K562 (cell line): ENCODE measurements at regions of chr1 and their contacts with region 1.

Region 1: GRCh38 chr1:45583264-45583665 is 576 bp upstream of the NASP start:
- DNase-seq: peak; percentile 98 to 100 (median 98)
- ATAC-seq: peak; percentile 91
- H3K4me3 ChIP-seq: peak overlapping the region; percentile 88
- H3K27ac ChIP-seq: peak overlapping the region; percentile 97
- H3K4me1 ChIP-seq: peaks cover 6 to 21% of the 10 kb centered on the region in 2 experiments; a peak in 4 of 5 replicates
- H3K27me3 ChIP-seq: no peaks in the 10 kb centered on the region
- CTCF ChIP-seq: no peak
- EP300 ChIP-seq: no peak
- POLR2A ChIP-seq: no peak
- RAD21 ChIP-seq: no peak

Region 2: DNA sequence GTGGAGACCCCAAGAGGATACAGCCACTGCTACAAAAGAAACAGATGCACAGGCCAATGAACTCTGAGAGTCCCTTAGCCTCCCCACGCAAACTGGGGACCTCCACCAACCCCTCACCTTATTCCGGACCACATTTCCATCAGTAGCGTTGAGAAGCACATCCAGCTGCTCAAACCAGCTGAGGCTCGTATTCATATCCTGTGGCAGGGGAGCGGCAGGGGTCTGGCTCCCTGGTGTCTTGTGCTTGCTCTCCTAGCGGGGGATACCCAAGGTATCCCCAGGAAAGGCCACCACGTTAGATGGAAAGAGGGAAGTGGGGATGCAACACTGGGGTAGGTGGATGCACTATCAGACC is 83.9 kb before region 1 on chr1:
- CTCF ChIA-PET with region 1: no interaction called
- POLR2A ChIA-PET with region 1: interaction called, 11 read pairs
- in situ Hi-C with region 1: no loop called
- intact Hi-C with region 1: no loop called
- DNase-seq: peak in 1 of 4 experiments; percentile 55
- ATAC-seq: peak; percentile 3
- H3K4me3 ChIP-seq: peak overlapping the region; percentile 44
- H3K27ac ChIP-seq: peak overlapping the region; percentile 56; the same call in 2 of the 3 replicates
- H3K4me1 ChIP-seq: peaks cover 18 to 19% of the 10 kb centered on the region in 2 experiments; a peak in 4 of 5 replicates
- H3K27me3 ChIP-seq: no peaks in the 10 kb centered on the region
- CTCF ChIP-seq: 0 out of 6 replicates have a peak, but pooled peaks of 1 of the 3 experiments have one; percentile 7
- EP300 ChIP-seq: no peak
- POLR2A ChIP-seq: no peak
- RAD21 ChIP-seq: no peak

Region 3: DNA sequence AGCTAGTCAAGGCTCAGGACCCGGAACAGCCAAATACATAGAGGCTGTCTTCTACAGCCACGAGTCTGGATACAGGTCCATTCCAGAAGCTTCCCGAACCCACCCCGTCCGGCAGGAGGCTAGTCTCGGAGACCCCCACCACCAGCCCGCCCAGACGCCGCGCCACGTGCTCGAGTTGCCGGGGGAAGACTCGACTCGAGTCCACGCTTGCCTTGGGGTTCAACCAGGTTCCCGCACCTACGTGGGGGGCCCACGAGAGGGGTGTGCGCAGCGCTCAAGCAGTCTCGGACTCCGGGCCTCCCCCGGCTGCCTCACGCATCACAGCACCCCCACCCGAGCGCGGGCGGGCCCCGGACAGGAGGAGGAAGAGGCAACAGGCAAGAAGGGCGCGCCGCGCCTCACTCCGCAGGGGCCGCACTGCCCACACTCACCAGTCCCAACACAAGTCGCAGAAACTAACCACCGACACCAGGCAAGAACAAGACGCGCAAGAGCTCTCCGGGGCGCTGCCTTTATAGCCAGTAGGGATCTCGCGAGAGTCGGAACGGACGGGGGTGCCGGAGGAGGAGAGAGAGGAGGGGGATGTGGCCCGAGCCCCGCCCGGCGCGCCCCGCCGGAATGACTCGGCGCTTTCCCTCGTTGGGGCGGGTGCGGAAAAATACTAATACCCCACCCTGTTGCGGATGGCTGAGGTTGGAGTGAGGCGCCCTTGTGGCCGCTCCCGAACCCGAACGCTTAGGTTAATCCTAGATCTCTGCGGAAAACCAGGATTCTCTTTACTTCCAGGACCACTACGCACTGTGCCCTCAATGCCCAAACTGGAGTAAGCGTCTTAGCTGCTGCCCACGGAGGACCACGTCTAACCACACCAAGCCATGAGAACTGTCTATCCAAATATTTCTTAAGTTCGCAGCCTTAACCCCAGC is 61.6 kb before region 1 on chr1 and contains the start of gene PRDX1:
- CTCF ChIA-PET with region 1: no interaction called
- POLR2A ChIA-PET with region 1: interaction called, 142 read pairs
- in situ Hi-C with region 1: no loop called
- intact Hi-C with region 1: no loop called
- DNase-seq: peak; percentile 97 to 99 (median 98)
- ATAC-seq: peak; percentile 92
- H3K4me3 ChIP-seq: peak within 1 kb of the TSS; percentile 96
- H3K27ac ChIP-seq: peak within 1 kb of the TSS; percentile 87
- H3K4me1 ChIP-seq: peaks cover 25 to 29% of the 10 kb centered on the region in 2 experiments
- H3K27me3 ChIP-seq: no peaks in the 10 kb centered on the region
- CTCF ChIP-seq: peak in 2 of 3 experiments; percentile 38 to 39; a peak in 4 of 6 replicates
- EP300 ChIP-seq: peak; percentile 66; the same call in 1 of the 2 replicates
- POLR2A ChIP-seq: peak; percentile 100
- RAD21 ChIP-seq: peak; percentile 7 to 18
- polyA plus RNA-seq, gene PRDX1: 2,282 to 2,388 TPM

Region 4: DNA sequence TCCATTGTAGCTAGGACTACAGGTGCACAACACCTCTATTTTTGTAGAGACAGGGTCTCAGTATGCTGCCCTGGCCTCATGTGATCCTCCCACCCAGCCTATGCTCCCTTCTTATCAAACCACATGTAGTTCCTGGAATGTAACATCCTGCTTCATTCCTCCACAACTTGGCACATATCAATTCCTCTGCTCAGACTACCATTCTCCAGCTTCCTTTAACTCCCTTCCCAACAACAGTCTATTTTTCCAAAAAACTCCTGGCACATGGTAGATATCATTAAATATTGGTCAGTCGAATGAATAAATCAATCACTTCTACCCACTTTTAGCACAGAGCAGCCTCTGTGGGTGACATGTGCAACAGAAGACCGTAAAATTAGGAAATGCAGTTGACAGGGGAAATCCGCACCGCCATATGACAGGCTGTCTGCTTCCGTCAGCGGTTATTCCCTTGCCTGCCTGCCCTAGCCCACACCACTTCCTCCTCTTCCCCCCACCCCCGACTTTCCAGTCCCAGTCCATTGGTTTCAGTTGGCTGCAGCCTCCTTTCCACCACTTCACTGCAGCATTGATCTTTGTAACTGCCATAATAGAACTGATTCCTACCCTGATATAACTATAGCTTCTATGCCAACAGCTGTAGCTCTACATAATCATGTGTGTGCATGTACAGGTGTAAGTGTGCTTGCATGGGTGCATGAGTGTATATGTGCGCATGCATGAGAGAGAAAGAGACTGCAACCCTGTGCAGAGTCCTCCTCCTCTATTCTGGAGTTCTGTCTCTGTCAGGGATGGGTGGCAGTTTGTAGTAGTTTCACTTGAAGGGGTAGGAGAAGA is 39.5 kb before region 1 on chr1:
- CTCF ChIA-PET with region 1: no interaction called
- POLR2A ChIA-PET with region 1: interaction called, 22 read pairs
- in situ Hi-C with region 1: no loop called
- intact Hi-C with region 1: no loop called
- DNase-seq: peak in 1 of 4 experiments; percentile 31
- ATAC-seq: peak; percentile 41
- H3K4me3 ChIP-seq: no peak overlapping the region
- H3K27ac ChIP-seq: no peak overlapping the region
- H3K4me1 ChIP-seq: peaks cover 8 to 16% of the 10 kb centered on the region in 2 experiments
- H3K27me3 ChIP-seq: no peaks in the 10 kb centered on the region
- CTCF ChIP-seq: no peak
- EP300 ChIP-seq: no peak
- POLR2A ChIP-seq: no peak
- RAD21 ChIP-seq: no peak

Region 5: DNA sequence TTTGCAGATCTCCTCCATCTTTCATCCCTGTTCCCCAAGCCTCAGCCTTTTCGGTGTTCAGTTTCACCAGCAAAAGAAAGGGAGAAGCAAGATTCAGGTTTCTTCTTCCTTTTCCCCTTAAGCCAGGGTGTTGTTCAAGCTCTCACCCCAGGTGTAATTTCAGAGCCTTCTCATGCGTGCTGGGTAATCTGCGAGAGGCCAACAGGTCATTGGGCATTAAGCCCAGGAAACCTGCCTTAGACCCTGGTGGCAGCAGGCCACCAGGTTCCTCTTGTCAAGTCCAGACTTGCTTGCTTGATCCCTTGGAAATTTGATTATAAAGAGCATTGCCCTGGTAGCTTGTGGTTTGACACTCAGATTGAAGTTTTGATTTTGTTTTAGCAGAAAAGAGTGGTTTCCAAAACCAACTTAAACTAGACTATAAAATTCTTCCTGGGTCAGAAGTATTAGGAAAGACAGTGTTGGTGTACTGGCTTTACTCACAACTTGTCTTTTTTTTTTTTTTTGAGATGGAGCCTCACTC is 25.8 kb before region 1 on chr1:
- CTCF ChIA-PET with region 1: no interaction called
- POLR2A ChIA-PET with region 1: interaction called, 16 read pairs
- in situ Hi-C with region 1: no loop called
- intact Hi-C with region 1: no loop called
- DNase-seq: peak in 1 of 4 experiments; percentile 6
- ATAC-seq: no peak
- H3K4me3 ChIP-seq: no peak overlapping the region
- H3K27ac ChIP-seq: 0 out of 3 replicates have a peak overlapping the region, but pooled peaks have one; percentile 34
- H3K4me1 ChIP-seq: peaks cover 0 to under 1% of the 10 kb centered on the region in 2 experiments; a peak in 1 of 5 replicates
- H3K27me3 ChIP-seq: no peaks in the 10 kb centered on the region
- CTCF ChIP-seq: no peak
- EP300 ChIP-seq: no peak
- POLR2A ChIP-seq: no peak
- RAD21 ChIP-seq: no peak

Region 6: DNA sequence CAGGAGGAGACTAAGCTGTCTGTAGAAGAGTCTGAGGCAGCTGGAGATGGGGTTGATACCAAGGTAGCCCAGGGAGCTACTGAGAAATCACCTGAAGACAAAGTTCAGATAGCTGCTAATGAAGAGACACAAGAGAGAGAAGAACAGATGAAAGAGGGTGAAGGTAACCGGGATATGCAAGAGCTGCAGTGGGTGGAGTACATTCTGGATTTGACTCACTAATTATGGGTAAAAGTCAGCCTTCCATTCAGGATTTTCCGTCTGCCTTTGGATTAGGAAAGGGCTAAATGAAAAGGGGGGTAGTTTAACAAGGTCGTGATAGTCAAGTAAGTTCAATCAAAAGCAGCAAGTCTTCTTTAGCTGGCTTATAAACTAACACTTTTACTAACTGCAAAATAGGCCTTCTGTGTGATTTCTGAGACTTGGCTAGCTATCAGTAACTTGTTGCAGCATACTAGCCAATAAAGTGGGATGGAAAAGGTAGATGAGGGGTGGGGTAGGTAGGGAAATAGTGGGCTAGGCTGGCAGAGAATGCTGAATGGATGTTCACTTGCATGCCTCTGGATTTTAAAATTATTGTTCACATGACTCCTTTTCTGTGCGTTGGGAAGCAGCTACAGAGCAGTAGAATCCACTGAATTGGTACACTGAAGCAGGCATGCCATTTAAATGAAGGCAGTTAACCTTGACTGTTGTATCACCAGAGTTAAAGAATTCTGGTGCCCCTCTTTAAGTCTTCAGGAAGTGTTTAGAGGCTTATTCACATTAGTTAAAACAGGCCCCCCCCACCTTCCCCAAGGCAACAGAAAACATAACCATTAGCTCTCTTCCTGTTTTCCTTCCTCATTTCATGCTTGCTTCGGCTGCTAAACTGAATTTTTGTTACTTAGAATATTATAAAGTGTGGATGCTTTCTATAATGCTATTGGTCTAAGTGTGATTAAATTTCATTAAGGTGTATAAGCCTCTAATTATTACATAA is 25.2 kb after region 1 on chr1:
- CTCF ChIA-PET with region 1: no interaction called
- POLR2A ChIA-PET with region 1: interaction called, 70 read pairs
- in situ Hi-C with region 1: no loop called
- intact Hi-C with region 1: no loop called
- DNase-seq: no peak
- ATAC-seq: no peak; the same call in 2 of the 3 replicates
- H3K4me3 ChIP-seq: no peak overlapping the region
- H3K27ac ChIP-seq: no peak overlapping the region
- H3K4me1 ChIP-seq: no peaks in the 10 kb centered on the region; a peak in 1 of 5 replicates
- H3K27me3 ChIP-seq: no peaks in the 10 kb centered on the region
- CTCF ChIP-seq: no peak
- EP300 ChIP-seq: no peak
- POLR2A ChIP-seq: no peak; the same call in 1 of the 2 replicates
- RAD21 ChIP-seq: no peak

Region 7: DNA sequence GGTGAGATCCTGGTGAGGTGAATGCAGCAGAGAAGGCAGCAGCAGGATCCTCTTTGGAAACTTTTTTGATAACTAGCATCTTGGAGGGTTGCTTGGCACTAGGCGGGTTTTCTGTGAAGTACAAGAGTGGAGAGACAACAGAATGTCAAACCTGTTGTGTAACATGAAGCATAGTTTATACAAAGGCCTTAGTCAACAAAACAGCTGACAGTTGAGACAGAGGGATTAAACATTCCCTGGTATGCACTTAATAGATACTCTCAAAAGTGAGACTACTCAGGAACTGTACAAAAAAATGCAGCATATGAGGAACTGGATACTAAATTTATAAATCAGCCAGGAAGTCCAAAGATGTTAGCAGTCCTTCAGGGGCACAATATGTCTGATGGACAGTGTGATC is 57.0 kb after region 1 on chr1:
- CTCF ChIA-PET with region 1: no interaction called
- POLR2A ChIA-PET with region 1: no interaction called
- in situ Hi-C with region 1: no loop called
- intact Hi-C with region 1: no loop called
- DNase-seq: no peak
- ATAC-seq: no peak
- H3K4me3 ChIP-seq: no peak overlapping the region
- H3K27ac ChIP-seq: no peak overlapping the region
- H3K4me1 ChIP-seq: no peaks in the 10 kb centered on the region
- H3K27me3 ChIP-seq: no peaks in the 10 kb centered on the region
- CTCF ChIP-seq: no peak
- EP300 ChIP-seq: no peak
- POLR2A ChIP-seq: no peak
- RAD21 ChIP-seq: no peak

Region 8: DNA sequence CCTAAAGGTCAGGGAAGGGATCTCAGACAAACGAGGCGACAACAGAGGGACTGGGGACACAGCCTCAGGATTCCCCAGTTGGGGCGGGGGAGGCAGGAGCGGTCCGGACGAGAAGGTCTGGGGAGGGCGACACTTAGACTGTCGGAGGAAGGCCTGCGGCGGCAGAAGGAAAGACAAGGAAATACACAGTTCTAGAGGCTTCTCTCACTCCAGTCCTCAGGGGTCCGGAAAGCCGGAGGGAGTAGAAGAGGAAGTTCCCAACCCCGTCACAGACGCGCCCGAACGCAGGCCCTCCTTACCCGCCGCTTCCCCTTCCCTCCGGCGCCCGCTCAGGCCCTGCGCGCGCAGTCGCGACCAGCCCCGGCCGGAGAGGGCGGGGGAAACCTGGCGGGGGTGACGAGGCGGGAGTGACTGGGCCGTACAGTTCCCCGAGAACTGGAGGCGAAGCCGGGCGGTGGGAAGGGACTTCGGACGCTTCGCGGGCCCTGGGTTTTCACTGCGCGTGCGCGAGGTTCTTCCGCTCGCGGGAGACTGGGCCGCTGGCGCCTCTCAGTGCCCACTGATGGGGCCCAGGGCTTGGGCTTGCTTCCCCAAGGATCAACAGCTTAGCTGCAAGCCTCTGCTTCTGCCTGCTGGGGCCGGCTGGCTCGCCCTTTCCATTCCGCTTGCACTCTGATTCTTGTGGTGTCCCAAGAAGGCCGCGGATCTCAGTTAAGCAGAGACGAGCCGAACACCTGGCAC is 167.2 kb after region 1 on chr1 and contains the start of gene IPP:
- CTCF ChIA-PET with region 1: no interaction called
- POLR2A ChIA-PET with region 1: no interaction called
- in situ Hi-C with region 1: no loop called
- intact Hi-C with region 1: loop called (anchors 5 kb)
- DNase-seq: peak; percentile 99
- ATAC-seq: peak; percentile 96
- H3K4me3 ChIP-seq: peak within 1 kb of the TSS; percentile 51
- H3K27ac ChIP-seq: peak within 1 kb of the TSS; percentile 92
- H3K4me1 ChIP-seq: peaks cover 35 to 43% of the 10 kb centered on the region in 2 experiments
- H3K27me3 ChIP-seq: no peaks in the 10 kb centered on the region
- CTCF ChIP-seq: peak; percentile 37 to 75 (median 71); a peak in 5 of 6 replicates
- EP300 ChIP-seq: peak; percentile 41; the same call in 1 of the 2 replicates
- POLR2A ChIP-seq: peak; percentile 99
- RAD21 ChIP-seq: peak; percentile 49 to 75
- polyA plus RNA-seq, gene IPP: 13.5 to 15.1 TPM

Region 9: GRCh38 chr1:46415514-46415913 is 832.2 kb after region 1 on chr1:
- CTCF ChIA-PET with region 1: no interaction called
- POLR2A ChIA-PET with region 1: no interaction called
- in situ Hi-C with region 1: no loop called
- intact Hi-C with region 1: no loop called
- DNase-seq: no peak
- ATAC-seq: no peak
- H3K4me3 ChIP-seq: no peak overlapping the region
- H3K27ac ChIP-seq: no peak overlapping the region
- H3K4me1 ChIP-seq: peaks cover 7 to 52% of the 10 kb centered on the region in 2 experiments; a peak in 4 of 5 replicates
- H3K27me3 ChIP-seq: no peaks in the 10 kb centered on the region
- CTCF ChIP-seq: no peak
- EP300 ChIP-seq: no peak
- POLR2A ChIP-seq: no peak
- RAD21 ChIP-seq: no peak